Heart right ventricle (tissue), 16 donors: ENCODE measurements at regions of chr2 and their contacts with region 1.

Region 1: DNA sequence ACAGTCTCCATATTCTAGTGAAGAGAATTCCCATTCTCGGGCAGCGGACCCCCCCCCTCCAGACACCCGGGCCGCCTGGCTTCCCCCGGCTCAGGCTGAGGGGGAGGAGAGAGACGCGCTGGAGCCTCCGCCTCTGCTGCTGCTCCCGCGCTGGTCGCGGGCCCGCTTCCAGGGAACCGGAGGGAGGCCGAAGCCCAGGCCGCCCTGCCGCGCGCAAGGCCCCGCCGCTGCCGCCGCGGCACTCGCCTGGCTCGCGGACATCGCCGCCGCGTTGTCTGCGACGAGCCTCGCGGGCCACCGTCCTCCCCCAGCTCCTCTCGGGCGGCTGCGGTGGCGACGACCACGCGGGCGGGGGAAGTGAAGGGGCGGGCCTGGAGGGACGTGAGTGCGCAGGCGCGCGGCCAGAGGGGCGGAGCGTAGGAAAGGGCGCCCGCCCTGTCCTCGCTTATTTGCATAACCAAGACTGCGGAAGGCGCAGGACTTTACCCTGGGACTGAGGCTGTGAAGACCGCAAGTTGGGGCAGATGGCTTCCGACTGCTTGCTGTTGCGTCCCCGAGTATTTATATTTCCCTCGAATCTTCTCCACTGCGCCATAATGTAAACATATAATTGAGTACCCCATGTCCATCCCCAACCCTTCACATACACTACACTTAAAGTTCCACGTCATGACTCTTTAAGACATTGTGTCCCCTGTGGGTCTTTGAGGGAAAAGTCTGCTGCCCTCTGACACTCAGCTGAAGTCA is at the start of gene ARL5A:
- DNase-seq: peak; percentile 93 to 97
- ATAC-seq: peak; percentile 97 to 99 (median 99)
- H3K4me3 ChIP-seq: peak within 1 kb of the TSS; percentile 73 to 95 (median 92)
- H3K27ac ChIP-seq: peak within 1 kb of the TSS; percentile 79 to 96 (median 90)
- H3K4me1 ChIP-seq: peaks cover 4 to 58% (median 46%) of the 10 kb centered on the region in 9 donors
- H3K27me3 ChIP-seq: no peaks in the 10 kb centered on the region
- CTCF ChIP-seq: no peak
- total RNA-seq, gene ARL5A: 40.4 to 62.3 (median 56.4) TPM

Region 2: DNA sequence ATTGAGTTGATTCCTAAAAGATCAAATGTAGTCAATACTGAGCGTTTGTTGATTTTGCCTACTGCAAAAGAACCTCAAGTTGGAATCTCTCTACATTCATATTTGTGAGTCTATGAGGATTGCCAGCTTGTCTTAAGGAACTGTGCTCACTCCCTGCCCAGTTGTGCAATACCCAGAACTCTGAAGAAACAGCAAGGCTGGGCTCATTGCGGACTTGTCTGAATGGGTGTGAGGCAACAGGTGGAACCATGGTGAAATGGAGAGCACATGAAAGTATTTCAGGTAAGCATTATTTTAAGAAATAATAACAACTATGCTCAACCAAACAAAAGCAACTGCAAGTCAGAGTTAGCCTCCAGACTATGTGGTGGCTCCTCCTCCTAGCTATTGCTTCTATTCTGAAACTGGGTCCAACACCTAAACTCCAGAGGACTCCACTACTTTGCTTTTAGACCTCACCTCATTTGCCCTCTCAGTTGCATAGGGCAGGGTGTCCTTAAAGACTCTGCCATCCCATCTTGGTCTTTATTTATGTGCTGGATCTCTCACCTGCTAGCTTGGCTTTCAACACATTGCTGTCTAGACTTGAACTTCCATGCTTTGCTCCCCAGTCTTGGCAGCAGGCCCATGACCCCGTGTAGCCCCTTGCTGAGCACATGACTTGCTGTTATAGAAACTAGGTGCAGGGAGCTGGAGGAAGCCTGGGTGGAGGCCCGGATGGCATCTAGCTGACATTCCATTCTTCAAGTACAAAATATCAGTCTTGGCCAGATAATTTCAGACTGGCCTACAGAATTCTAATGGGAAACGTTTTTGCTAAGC is 94.7 kb after region 1 on chr2:
- intact Hi-C with region 1: loop called in 1 of 10 experiments (anchors 5 kb)
- DNase-seq: peak; percentile 86 to 87
- ATAC-seq: peak; percentile 81 to 95 (median 93)
- H3K4me3 ChIP-seq: no peak overlapping the region
- H3K27ac ChIP-seq: peak overlapping the region in 2 of 10 donors; percentile 17 to 60
- H3K4me1 ChIP-seq: peaks cover 0 to 52% (median 22%) of the 10 kb centered on the region in 9 donors
- H3K27me3 ChIP-seq: no peaks in the 10 kb centered on the region
- CTCF ChIP-seq: no peak

Region 3: GRCh38 chr2:151946899-151947822 is 118.8 kb after region 1 on chr2:
- intact Hi-C with region 1: loop called in 2 of 10 experiments (anchors 10 kb)
- DNase-seq: peak in 1 of 2 donors; percentile 48
- ATAC-seq: peak; percentile 50 to 87 (median 79)
- H3K4me3 ChIP-seq: peak overlapping the region in 9 of 10 donors; percentile 10 to 48 (median 38)
- H3K27ac ChIP-seq: peak overlapping the region in 2 of 10 donors; percentile 31 to 35
- H3K4me1 ChIP-seq: peaks cover 0 to 23% (median 11%) of the 10 kb centered on the region in 9 donors
- H3K27me3 ChIP-seq: no peaks in the 10 kb centered on the region
- CTCF ChIP-seq: peak; percentile 33 to 72 (median 66)

Region 4: DNA sequence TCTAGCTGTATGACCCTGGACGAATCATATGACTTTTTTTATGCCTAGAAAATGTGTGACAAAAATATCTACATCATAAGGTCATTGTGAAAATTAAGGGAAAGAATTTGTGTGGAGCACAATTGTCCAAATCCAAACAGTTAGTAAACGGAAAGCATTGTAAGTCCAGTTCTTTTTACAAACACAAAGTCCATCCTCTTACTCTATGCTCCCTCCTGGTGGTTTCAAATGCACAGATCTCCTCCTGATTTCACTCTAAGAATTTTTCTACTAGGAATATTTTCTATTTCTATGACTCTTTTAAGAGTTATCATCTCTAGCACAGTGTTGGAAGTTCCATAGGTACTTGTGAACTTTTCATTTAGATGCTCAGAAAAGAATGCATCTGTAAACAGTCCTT is 125.2 kb after region 1 on chr2:
- intact Hi-C with region 1: loop called in 2 of 10 experiments (anchors 10 kb)
- DNase-seq: no peak
- ATAC-seq: no peak
- H3K4me3 ChIP-seq: no peak overlapping the region
- H3K27ac ChIP-seq: no peak overlapping the region
- H3K4me1 ChIP-seq: peaks cover 0 to 5% (median 0%) of the 10 kb centered on the region in 9 donors
- H3K27me3 ChIP-seq: no peaks in the 10 kb centered on the region
- CTCF ChIP-seq: peak in 2 of 9 donors; percentile 17 to 31

Region 5: GRCh38 chr2:151999053-151999452 is 170.7 kb after region 1 on chr2:
- intact Hi-C with region 1: loop called in 6 of 10 experiments (anchors 10 kb)
- DNase-seq: peak; percentile 22 to 31
- ATAC-seq: peak in 7 of 8 donors; percentile 46 to 77 (median 73)
- H3K4me3 ChIP-seq: no peak overlapping the region
- H3K27ac ChIP-seq: no peak overlapping the region
- H3K4me1 ChIP-seq: peaks cover 0 to 1% (median 0%) of the 10 kb centered on the region in 9 donors
- H3K27me3 ChIP-seq: no peaks in the 10 kb centered on the region
- CTCF ChIP-seq: peak; percentile 59 to 81 (median 75)

Region 6: GRCh38 chr2:152005607-152006006 is 177.3 kb after region 1 on chr2:
- intact Hi-C with region 1: loop called in 5 of 10 experiments (anchors 10 kb)
- DNase-seq: no peak
- ATAC-seq: no peak
- H3K4me3 ChIP-seq: no peak overlapping the region
- H3K27ac ChIP-seq: no peak overlapping the region
- H3K4me1 ChIP-seq: peaks cover 0 to 15% (median 0%) of the 10 kb centered on the region in 9 donors
- H3K27me3 ChIP-seq: no peaks in the 10 kb centered on the region
- CTCF ChIP-seq: no peak